GM12878 (cell line): ENCODE measurements at regions of chr6 and their contacts with region 1.

Region 1: GRCh38 chr6:27146706-27147505 is 100.6 kb upstream of the PRSS16 start:
- DNase-seq: peak; percentile 100
- ATAC-seq: peak; percentile 73
- H3K4me3 ChIP-seq: peak overlapping the region; percentile 92
- H3K27ac ChIP-seq: peak overlapping the region; percentile 98
- H3K4me1 ChIP-seq: peaks cover 10% of the 10 kb centered on the region; the same call in 1 of the 2 replicates
- H3K27me3 ChIP-seq: no peaks in the 10 kb centered on the region
- CTCF ChIP-seq: no peak
- EP300 ChIP-seq: no peak; a peak in 1 of 4 replicates
- POLR2A ChIP-seq: peak; percentile 88
- RAD21 ChIP-seq: no peak

Region 2: DNA sequence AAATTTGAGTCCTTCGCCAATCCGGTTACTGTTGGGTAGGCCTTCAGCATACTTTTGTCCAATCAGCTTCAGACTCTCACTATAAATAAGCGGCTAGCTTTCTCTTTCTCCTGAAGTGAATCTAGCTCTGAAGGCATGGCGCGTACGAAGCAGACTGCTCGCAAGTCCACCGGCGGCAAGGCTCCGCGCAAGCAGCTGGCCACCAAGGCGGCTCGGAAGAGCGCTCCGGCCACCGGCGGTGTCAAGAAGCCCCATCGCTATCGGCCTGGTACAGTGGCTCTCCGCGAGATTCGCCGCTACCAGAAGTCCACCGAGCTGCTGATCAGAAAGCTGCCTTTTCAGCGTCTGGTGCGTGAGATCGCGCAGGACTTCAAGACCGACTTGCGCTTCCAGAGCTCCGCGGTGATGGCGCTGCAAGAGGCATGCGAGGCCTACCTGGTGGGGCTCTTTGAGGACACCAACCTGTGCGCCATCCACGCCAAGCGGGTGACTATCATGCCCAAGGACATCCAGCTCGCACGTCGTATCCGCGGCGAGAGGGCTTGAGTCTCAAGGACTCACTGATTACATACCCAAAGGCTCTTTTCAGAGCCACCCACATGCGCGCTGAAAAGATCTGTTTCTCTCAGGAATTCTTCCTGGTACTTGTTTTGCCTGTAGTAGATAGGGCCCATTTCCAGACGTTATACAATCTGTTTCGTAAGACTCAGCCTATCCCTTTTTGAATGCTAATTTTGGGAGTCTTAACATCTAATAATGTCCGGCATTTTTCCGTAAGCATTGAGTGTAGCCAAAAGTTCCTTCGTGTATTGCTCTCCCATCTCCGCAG is 663.2 kb after region 1 on chr6:
- CTCF ChIA-PET with region 1: interaction called, 3 read pairs
- POLR2A ChIA-PET with region 1: interaction called, 14 read pairs
- RAD21 ChIA-PET with region 1: interaction called, 4 read pairs
- SMC1A ChIA-PET with region 1: interaction called, 3 read pairs
- in situ Hi-C with region 1: loop called (anchors 10 kb)
- intact Hi-C with region 1: loop called (anchors 1 kb)
- DNase-seq: peak; percentile 98
- ATAC-seq: peak; percentile 43
- H3K4me3 ChIP-seq: peak overlapping the region; percentile 74
- H3K27ac ChIP-seq: peak overlapping the region; percentile 82
- H3K4me1 ChIP-seq: peaks cover 25% of the 10 kb centered on the region
- H3K27me3 ChIP-seq: no peaks in the 10 kb centered on the region
- CTCF ChIP-seq: peak in 1 of 3 experiments; percentile 19; a peak in 2 of 6 replicates
- EP300 ChIP-seq: no peak
- POLR2A ChIP-seq: peak; percentile 95
- RAD21 ChIP-seq: no peak